ENCODE measurements at regions of chr4 and their contacts with region 1.

Region 1: GRCh38 chr4:1459081-1459721 is 53.0 kb upstream of the NKX1-1 start:
- DNase-seq: no peak
- ATAC-seq: no peak
- H3K4me3 ChIP-seq: no peak overlapping the region
- H3K27ac ChIP-seq: no peak overlapping the region
- H3K4me1 ChIP-seq: no peaks in the 10 kb centered on the region
- H3K27me3 ChIP-seq: no peaks in the 10 kb centered on the region; the same call in 1 of the 2 replicates
- CTCF ChIP-seq: no peak

Region 2: DNA sequence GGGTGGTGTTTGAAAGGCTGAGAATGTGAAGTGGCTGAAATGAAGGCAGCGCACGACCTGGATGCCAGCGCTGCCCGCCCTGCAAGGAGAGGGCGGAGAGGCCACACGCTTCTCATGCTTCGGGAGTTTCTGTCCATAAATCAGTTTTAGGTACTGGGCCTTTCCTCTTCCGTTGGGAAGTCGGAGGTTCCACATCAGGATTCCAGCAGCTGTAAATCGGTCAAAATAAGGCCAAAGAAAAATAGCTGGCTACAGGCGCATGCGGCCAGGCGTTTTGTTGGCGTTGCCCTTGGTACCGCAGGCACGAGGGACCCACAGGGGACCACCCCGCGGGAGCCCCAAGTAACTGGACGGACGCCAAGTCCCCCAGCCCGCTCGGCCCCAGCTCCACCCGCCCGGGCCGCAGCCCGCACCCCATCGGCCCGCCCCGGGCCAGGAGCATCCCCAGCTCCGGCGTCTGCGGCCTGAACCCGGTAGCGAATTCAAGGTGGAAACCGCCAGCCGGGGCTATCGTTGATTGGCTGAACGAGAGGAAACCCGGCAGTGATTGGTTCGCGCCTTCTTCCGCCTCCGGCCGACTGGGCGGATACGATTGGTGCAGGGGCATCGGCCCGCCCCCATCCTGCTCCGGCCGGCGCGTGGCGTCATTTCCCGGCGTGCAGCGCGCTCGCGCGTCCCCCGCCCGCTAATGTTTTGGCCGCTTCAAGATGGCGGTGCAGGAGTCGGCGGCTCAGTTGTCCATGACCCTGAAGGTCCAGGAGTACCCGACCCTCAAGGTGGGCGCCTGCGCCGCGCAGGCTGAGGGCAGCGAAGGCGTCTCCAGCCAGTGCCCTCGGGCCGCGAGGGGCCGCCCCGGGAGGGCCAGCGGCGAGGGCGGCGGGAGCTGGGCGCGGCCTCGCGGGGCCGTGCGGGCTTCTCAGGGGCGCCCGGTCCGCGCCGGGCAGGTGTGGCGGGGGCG is 169.7 kb before region 1 on chr4 and contains the start of gene MAEA:
- CTCF ChIA-PET with region 1: no interaction called
- POLR2A ChIA-PET with region 1: no interaction called
- in situ Hi-C with region 1: no loop called
- intact Hi-C with region 1: no loop called
- DNase-seq: peak; percentile 80
- ATAC-seq: peak; percentile 96
- H3K4me3 ChIP-seq: peak within 1 kb of the TSS; percentile 81 to 89
- H3K27ac ChIP-seq: peak within 1 kb of the TSS; percentile 87
- H3K4me1 ChIP-seq: peaks cover 33% of the 10 kb centered on the region
- H3K27me3 ChIP-seq: no peaks in the 10 kb centered on the region
- CTCF ChIP-seq: no peak
- total RNA-seq, gene MAEA: 62.3 TPM

Region 3: DNA sequence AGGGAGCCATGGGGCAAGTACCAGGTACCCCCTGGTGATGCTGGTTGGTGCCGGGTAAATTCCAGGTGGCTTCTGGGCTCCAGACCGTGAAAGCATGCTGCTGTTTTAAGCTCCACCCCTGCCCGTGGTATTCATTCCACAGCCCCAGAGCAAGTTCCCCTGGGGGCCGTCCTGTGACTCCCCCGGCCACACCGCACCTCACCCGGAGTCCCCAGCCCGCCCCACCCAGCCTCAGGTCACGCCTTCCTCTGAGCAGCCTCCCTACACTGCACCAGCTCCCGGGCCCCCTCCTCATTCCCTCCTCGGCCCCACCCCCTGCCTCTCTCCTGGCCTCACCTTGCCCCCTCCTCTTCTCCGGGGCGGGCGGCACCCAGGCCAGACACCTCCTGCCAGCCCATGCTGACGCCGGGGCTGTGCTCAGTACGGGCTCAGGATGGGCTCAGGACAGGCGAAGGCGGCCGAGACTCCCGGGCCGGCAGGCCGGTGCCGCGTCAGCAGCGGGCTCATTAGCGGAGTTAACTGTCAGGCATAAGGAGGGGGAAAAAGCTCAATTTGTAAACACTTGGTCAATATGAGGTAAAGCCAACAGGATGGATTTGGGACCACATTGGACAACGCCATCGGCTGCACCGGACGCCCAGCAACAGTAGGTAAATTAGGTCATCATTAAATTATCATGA is 97.5 kb after region 1 on chr4:
- CTCF ChIA-PET with region 1: interaction called, 18 read pairs
- POLR2A ChIA-PET with region 1: no interaction called
- in situ Hi-C with region 1: no loop called
- intact Hi-C with region 1: no loop called
- DNase-seq: no peak
- ATAC-seq: no peak
- H3K4me3 ChIP-seq: no peak overlapping the region
- H3K27ac ChIP-seq: no peak overlapping the region
- H3K4me1 ChIP-seq: peaks cover 4% of the 10 kb centered on the region; the same call in 1 of the 2 replicates
- H3K27me3 ChIP-seq: no peaks in the 10 kb centered on the region
- CTCF ChIP-seq: no peak

Measured in Panc1 (cell line).